H1 (cell line): ENCODE measurements at regions of chr2 and their contacts with region 1.

Region 1: DNA sequence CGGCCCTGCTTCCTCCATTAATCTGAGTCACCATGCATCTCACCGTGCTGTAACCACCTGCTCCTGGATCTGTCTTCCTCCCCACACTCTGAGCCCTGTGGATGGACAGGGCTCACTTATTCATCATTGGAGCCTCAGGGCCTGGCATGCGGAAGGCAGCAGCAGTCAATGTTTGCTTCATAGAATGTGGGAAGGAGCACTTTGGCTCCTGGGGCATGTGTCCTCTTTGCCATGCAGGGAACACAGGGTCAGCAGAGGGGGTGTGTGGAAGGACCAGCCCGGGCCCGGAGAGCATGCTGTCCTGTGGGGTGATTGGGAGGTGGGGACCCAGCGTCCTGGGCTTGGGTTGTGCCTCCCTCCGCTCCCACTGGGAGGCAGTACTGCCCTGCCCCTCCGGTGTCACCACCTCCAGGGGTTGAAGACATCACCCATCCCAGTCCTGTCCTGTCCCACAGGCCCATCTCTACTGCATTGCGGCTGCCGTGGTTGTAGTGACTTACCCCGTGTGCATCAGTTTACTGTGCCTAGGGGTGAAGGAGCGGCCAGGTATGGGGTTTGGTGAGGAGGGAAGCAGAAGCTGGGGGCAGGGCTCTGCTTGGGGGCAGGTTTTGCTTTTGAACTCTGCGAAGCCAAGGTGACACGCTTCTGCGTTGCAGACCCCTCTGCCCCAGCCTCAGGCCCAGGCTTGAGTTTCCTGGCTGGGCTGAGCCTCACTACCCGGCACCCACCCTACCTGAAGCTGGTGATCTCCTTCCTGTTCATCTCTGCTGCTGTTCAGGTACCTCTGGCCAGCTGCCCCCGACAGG is 11.5 kb downstream of the MFSD2B start:
- DNase-seq: peak; percentile 43 to 83
- H3K4me3 ChIP-seq: no peak overlapping the region
- H3K27ac ChIP-seq: no peak overlapping the region
- H3K4me1 ChIP-seq: peaks cover 11 to 38% (median 18%) of the 10 kb centered on the region in 4 experiments
- H3K27me3 ChIP-seq: no peaks in the 10 kb centered on the region
- CTCF ChIP-seq: peak in 2 of 3 experiments; percentile 85 to 93; a peak in 3 of 4 replicates
- EP300 ChIP-seq: no peak
- POLR2A ChIP-seq: peak in 1 of 2 experiments; percentile 18; a peak in 1 of 3 replicates
- RAD21 ChIP-seq: peak; percentile 93 to 95

Region 2: GRCh38 chr2:23912054-23912453 is 109.3 kb before region 1 on chr2:
- CTCF ChIA-PET with region 1: no interaction called
- POLR2A ChIA-PET with region 1: no interaction called
- DNase-seq: no peak
- H3K4me3 ChIP-seq: no peak overlapping the region
- H3K27ac ChIP-seq: no peak overlapping the region
- H3K4me1 ChIP-seq: peaks cover 0 to 5% (median 2%) of the 10 kb centered on the region in 4 experiments; a peak in 4 of 7 replicates
- H3K27me3 ChIP-seq: no peaks in the 10 kb centered on the region
- CTCF ChIP-seq: no peak
- EP300 ChIP-seq: no peak
- POLR2A ChIP-seq: no peak
- RAD21 ChIP-seq: no peak

Region 3: DNA sequence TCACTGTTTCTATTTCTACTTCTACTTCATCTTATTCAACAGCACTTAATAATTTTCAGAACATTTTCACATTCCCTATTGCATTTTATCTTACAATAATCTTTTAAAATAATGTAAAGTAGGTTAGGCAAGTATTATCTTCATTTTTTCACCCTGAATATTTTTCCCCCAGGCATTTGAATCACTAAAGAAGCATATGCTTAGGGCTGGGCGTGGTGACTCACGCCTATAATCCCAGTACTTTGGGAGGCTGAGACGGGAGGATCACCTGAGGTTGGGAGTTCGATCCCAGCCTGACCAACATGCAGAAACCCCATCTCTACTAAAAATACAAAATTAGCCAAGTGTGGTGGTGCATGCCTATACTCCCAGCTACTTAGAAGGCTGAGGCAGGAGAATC is 19.1 kb after region 1 on chr2:
- CTCF ChIA-PET with region 1: interaction called, 7 read pairs
- POLR2A ChIA-PET with region 1: interaction called, 14 read pairs
- DNase-seq: no peak
- H3K4me3 ChIP-seq: no peak overlapping the region
- H3K27ac ChIP-seq: no peak overlapping the region
- H3K4me1 ChIP-seq: no peaks in the 10 kb centered on the region
- H3K27me3 ChIP-seq: no peaks in the 10 kb centered on the region
- CTCF ChIP-seq: no peak
- EP300 ChIP-seq: no peak
- POLR2A ChIP-seq: no peak
- RAD21 ChIP-seq: no peak

Region 4: GRCh38 chr2:24409700-24410556 is 388.5 kb after region 1 on chr2:
- CTCF ChIA-PET with region 1: no interaction called
- POLR2A ChIA-PET with region 1: no interaction called
- DNase-seq: no peak
- H3K4me3 ChIP-seq: no peak overlapping the region
- H3K27ac ChIP-seq: no peak overlapping the region
- H3K4me1 ChIP-seq: peaks cover 0 to 7% (median 3%) of the 10 kb centered on the region in 4 experiments; a peak in 2 of 7 replicates
- H3K27me3 ChIP-seq: no peaks in the 10 kb centered on the region
- CTCF ChIP-seq: peak in 2 of 3 experiments; percentile 76 to 90; a peak in 3 of 4 replicates
- EP300 ChIP-seq: no peak
- POLR2A ChIP-seq: no peak
- RAD21 ChIP-seq: peak; percentile 90 to 97